Activated T-helper 2 cell treated with anti-CD3 and anti-CD28 coated beads, Interferon-gamma antibody, Interleukin-2, Interleukin-4, amounts not matched to agents 10 μg/mL and 5 μg/mL and 100 μg/mL, durations not matched to agents 14 hours and 24 hours and 36 hours (primary cell): ENCODE measurements at regions of chr9 and their contacts with region 1.

Region 1: GRCh38 chr9:93064392-93065134 is 6.1 kb downstream of the SUSD3 start:
- DNase-seq: peak; percentile 90
- H3K4me3 Mint-ChIP-seq: peak overlapping the region; percentile 76
- H3K27ac Mint-ChIP-seq: peak overlapping the region; percentile 94
- H3K4me1 Mint-ChIP-seq: peaks cover 64% of the 10 kb centered on the region
- H3K27me3 Mint-ChIP-seq: no peaks in the 10 kb centered on the region

Region 2: DNA sequence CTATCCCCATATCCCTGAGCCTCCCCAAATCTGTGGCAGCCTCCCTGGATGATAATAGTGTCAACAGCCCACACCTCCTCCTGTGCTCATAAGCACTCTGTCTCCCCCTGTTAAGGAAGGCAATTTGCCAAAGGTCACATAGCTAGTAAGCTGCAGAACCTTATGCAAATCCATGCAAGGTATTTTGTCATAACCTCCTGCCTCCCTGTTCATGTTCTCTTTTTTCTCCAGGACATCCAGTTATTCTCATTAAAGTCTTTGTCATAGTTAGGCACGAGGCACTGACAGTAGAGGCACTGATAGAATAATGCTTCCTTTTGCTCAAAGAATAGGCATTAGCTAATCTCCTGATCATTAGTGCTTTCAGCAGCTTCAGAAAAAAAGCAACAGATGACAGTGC is 1692.7 kb before region 1 on chr9:
- intact Hi-C with region 1: no loop called
- DNase-seq: no peak
- H3K4me3 Mint-ChIP-seq: no peak overlapping the region
- H3K27ac Mint-ChIP-seq: no peak overlapping the region
- H3K4me1 Mint-ChIP-seq: peaks cover 16% of the 10 kb centered on the region
- H3K27me3 Mint-ChIP-seq: no peaks in the 10 kb centered on the region

Region 3: GRCh38 chr9:93095205-93096130 is 30.9 kb after region 1 on chr9:
- intact Hi-C with region 1: loop called (anchors 1 kb)
- DNase-seq: peak; percentile 100
- H3K4me3 Mint-ChIP-seq: peak overlapping the region; percentile 83
- H3K27ac Mint-ChIP-seq: peak overlapping the region; percentile 98
- H3K4me1 Mint-ChIP-seq: peaks cover 66% of the 10 kb centered on the region
- H3K27me3 Mint-ChIP-seq: no peaks in the 10 kb centered on the region

Region 4: DNA sequence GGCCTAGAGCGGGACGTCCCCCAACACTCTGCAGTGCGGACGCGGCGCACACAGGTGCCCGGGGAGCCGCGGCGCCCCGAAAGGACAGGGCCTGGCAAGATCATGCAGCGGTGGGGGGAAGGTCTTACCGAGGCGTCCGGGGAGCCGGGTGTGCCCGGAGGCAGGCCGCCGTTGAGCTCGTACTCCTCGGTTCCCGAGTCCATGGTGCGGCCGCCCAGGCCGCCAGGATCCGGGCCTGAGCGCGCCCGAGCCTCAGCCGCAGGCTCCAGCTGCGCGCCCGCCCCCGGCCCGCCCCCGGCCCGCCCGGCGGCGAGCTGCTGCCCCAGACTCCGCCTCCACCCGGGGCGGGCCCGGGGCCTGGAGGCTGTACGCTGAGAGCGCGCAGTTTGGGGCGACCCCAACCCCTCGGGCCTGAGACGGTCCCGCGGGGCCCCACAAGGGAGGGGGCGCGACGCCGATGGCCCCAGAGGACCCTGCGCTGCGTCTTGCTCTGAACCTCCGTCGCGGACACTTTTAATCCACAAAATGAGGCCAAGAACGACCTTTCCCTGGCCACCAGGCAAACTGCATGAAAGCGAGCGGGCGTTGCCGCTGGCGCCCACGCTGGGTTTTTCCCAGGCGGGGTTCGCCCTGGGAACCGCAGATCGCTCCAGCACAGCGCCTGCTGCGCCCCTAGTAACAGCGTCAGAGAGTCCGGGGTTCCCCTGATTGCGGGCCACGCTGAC is 69.6 kb after region 1 on chr9 and contains the start of gene NINJ1:
- intact Hi-C with region 1: loop called (anchors 5 kb)
- DNase-seq: peak; percentile 78
- H3K4me3 Mint-ChIP-seq: peak within 1 kb of the TSS; percentile 90
- H3K27ac Mint-ChIP-seq: peak within 1 kb of the TSS; percentile 94
- H3K4me1 Mint-ChIP-seq: peaks cover 43% of the 10 kb centered on the region
- H3K27me3 Mint-ChIP-seq: no peaks in the 10 kb centered on the region
- total RNA-seq, gene NINJ1: 113 and 114 TPM in 2 replicates

Region 5: GRCh38 chr9:93154315-93154903 is 89.8 kb after region 1 on chr9:
- intact Hi-C with region 1: loop called (anchors 1 kb)
- DNase-seq: peak; percentile 24
- H3K4me3 Mint-ChIP-seq: no peak overlapping the region
- H3K27ac Mint-ChIP-seq: peak overlapping the region; percentile 22
- H3K4me1 Mint-ChIP-seq: peaks cover 36% of the 10 kb centered on the region
- H3K27me3 Mint-ChIP-seq: no peaks in the 10 kb centered on the region

Region 6: GRCh38 chr9:93205045-93205768 is 140.6 kb after region 1 on chr9:
- intact Hi-C with region 1: no loop called
- DNase-seq: no peak
- H3K4me3 Mint-ChIP-seq: no peak overlapping the region
- H3K27ac Mint-ChIP-seq: no peak overlapping the region
- H3K4me1 Mint-ChIP-seq: peaks cover 1% of the 10 kb centered on the region
- H3K27me3 Mint-ChIP-seq: no peaks in the 10 kb centered on the region